ENCODE measurements at regions of chr13 and their contacts with region 1.

Region 1: GRCh38 chr13:110455941-110456340 is 105.6 kb downstream of the RAB20 start:
- DNase-seq: peak; percentile 84 to 88 (median 85)
- ATAC-seq: peak; percentile 99
- H3K4me3 ChIP-seq: no peak overlapping the region
- H3K27ac ChIP-seq: no peak overlapping the region
- H3K4me1 ChIP-seq: peaks cover 6 to 17% of the 10 kb centered on the region in 2 experiments; a peak in 4 of 5 replicates
- H3K27me3 ChIP-seq: peaks cover 2% of the 10 kb centered on the region in 2 experiments; a peak in 3 of 5 replicates
- CTCF ChIP-seq: peak; percentile 89 to 96 (median 91)
- EP300 ChIP-seq: no peak
- POLR2A ChIP-seq: no peak
- RAD21 ChIP-seq: peak; percentile 88 to 95

Region 2: GRCh38 chr13:110258876-110259631 is 196.9 kb before region 1 on chr13:
- CTCF ChIA-PET with region 1: no interaction called
- POLR2A ChIA-PET with region 1: no interaction called
- in situ Hi-C with region 1: no loop called
- intact Hi-C with region 1: no loop called
- DNase-seq: no peak
- ATAC-seq: no peak
- H3K4me3 ChIP-seq: no peak overlapping the region
- H3K27ac ChIP-seq: no peak overlapping the region
- H3K4me1 ChIP-seq: no peaks in the 10 kb centered on the region
- H3K27me3 ChIP-seq: peaks cover 2 to 23% of the 10 kb centered on the region in 2 experiments; a peak in 3 of 5 replicates
- CTCF ChIP-seq: no peak
- EP300 ChIP-seq: no peak
- POLR2A ChIP-seq: no peak
- RAD21 ChIP-seq: no peak

Region 3: DNA sequence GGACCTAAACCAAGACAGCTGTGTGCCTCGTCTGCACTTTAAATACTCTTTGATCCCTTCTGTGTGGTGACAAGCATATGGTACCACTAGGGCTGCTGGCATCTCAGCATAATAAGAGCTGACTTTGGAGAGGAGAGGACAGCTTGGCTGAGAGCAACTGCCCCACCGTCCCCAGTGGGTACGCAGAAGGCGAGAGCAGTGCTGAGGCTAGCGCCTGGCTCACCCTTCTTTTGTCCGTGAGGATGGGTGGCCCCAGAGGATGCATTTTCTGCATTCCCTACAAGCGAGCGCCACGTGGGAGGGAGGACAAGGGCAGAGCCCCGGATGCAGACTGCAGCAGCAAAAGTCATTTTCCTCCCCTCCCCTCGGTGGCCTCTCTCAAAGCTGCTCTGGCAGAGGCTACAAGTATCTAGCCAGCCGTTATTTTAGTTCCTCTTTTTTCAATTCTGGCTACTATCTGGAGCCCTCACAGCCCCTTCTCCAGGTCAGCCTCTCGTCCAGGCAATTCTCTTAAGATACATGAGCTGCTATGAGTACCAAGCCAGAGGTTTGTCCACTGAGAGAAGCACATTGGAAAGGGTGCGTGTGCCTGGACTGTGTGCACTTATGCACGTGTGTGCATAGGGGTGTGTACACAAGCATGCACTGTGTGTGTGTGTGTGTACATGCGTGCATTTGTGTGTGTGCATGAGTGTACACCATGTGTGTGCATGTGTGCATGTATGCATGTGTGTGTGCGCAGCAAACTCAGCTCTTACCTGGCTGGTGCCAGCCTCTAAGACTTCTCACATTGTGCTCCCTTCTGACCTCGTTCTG is 54.2 kb after region 1 on chr13:
- CTCF ChIA-PET with region 1: no interaction called
- POLR2A ChIA-PET with region 1: interaction called, 4 read pairs
- in situ Hi-C with region 1: no loop called
- intact Hi-C with region 1: loop called (anchors 2 kb)
- DNase-seq: peak; percentile 36 to 74 (median 52)
- ATAC-seq: peak; percentile 73
- H3K4me3 ChIP-seq: no peak overlapping the region
- H3K27ac ChIP-seq: peak overlapping the region; percentile 87
- H3K4me1 ChIP-seq: peaks cover 53 to 63% of the 10 kb centered on the region in 2 experiments
- H3K27me3 ChIP-seq: no peaks in the 10 kb centered on the region
- CTCF ChIP-seq: no peak
- EP300 ChIP-seq: peak; percentile 54; the same call in 1 of the 2 replicates
- POLR2A ChIP-seq: no peak
- RAD21 ChIP-seq: no peak

Region 4: GRCh38 chr13:110561344-110562035 is 105.5 kb after region 1 on chr13 and contains the start of gene RAB20:
- CTCF ChIA-PET with region 1: no interaction called
- POLR2A ChIA-PET with region 1: no interaction called
- in situ Hi-C with region 1: no loop called
- intact Hi-C with region 1: loop called (anchors 5 kb)
- DNase-seq: peak; percentile 78 to 91 (median 88)
- ATAC-seq: peak; percentile 83
- H3K4me3 ChIP-seq: peak within 1 kb of the TSS; percentile 70
- H3K27ac ChIP-seq: peak within 1 kb of the TSS; percentile 73
- H3K4me1 ChIP-seq: peaks cover 19 to 31% of the 10 kb centered on the region in 2 experiments; a peak in 4 of 5 replicates
- H3K27me3 ChIP-seq: no peaks in the 10 kb centered on the region
- CTCF ChIP-seq: no peak
- EP300 ChIP-seq: no peak
- POLR2A ChIP-seq: 0 out of 2 replicates have a peak, but pooled peaks have one; percentile 34
- RAD21 ChIP-seq: no peak
- polyA plus RNA-seq, gene RAB20: 0.62 to 0.82 TPM

Region 5: DNA sequence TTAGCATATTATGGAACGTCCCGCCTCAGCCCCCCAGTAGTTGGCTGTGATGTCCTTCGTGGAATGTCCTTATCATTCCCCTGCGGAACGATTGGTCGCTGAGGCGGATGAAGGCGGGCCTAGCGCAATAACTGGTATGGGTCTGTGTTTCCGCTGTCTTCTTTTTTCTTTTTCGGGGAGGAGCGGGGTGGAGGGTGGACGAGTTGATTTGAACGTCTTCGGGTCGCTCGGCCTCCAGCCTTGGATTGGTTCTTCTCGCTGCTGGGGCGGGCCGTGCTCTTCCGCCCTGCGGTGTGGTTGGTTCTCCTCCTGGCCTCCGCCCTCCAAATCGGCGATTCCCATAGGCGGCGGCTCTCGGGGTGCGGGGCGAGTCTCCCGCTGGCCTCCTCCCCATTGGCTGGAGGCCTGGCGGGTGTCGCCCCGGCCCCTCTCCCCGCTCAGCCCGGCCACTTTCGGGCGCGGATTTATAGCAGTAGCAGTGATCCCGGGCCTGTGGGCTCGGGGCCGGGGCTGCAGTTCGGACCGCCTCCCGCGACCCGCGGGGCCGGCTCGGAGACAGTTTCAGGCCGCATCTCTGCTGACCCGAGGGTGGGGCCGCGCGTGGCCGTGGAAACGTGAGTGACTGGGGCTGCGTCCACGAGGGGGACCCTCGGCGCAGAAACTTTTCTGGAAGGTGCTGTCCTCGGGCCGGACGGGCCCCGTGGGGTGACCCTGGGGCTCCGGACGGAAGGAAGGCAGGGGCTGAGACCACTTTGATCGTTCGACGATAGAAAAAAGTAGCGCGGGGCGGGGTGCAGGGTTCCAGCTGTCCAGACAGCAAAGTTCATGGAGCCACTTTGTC is 259.7 kb after region 1 on chr13:
- CTCF ChIA-PET with region 1: no interaction called
- POLR2A ChIA-PET with region 1: interaction called, 3 read pairs
- in situ Hi-C with region 1: no loop called
- intact Hi-C with region 1: loop called (anchors 10 kb)
- DNase-seq: peak; percentile 88 to 95 (median 90)
- ATAC-seq: peak; percentile 81
- H3K4me3 ChIP-seq: peak overlapping the region; percentile 86
- H3K27ac ChIP-seq: peak overlapping the region; percentile 68
- H3K4me1 ChIP-seq: peaks cover 2 to 26% of the 10 kb centered on the region in 2 experiments; a peak in 2 of 5 replicates
- H3K27me3 ChIP-seq: no peaks in the 10 kb centered on the region
- CTCF ChIP-seq: 0 out of 6 replicates have a peak, but pooled peaks of 1 of the 3 experiments have one; percentile 24
- EP300 ChIP-seq: no peak
- POLR2A ChIP-seq: no peak
- RAD21 ChIP-seq: no peak

Region 6: GRCh38 chr13:110915057-110915873 is 459.3 kb after region 1 on chr13 and contains the start of gene ANKRD10:
- CTCF ChIA-PET with region 1: no interaction called
- POLR2A ChIA-PET with region 1: no interaction called
- in situ Hi-C with region 1: no loop called
- intact Hi-C with region 1: loop called (anchors 10 kb)
- DNase-seq: peak; percentile 86 to 96 (median 92)
- ATAC-seq: peak; percentile 87
- H3K4me3 ChIP-seq: peak within 1 kb of the TSS; percentile 92
- H3K27ac ChIP-seq: peak within 1 kb of the TSS; percentile 94
- H3K4me1 ChIP-seq: peaks cover 4 to 18% of the 10 kb centered on the region in 2 experiments; a peak in 4 of 5 replicates
- H3K27me3 ChIP-seq: no peaks in the 10 kb centered on the region
- CTCF ChIP-seq: peak; percentile 61 to 80 (median 71)
- EP300 ChIP-seq: 0 out of 2 replicates have a peak, but pooled peaks have one; percentile 8
- POLR2A ChIP-seq: peak; percentile 58
- RAD21 ChIP-seq: peak; percentile 44 to 51
- polyA plus RNA-seq, gene ANKRD10: 22.1 to 31.0 TPM

Measured in K562 (cell line).